Astrocyte of the cerebellum (primary cell): ENCODE measurements at regions of chr1 and their contacts with region 1.

Region 1: DNA sequence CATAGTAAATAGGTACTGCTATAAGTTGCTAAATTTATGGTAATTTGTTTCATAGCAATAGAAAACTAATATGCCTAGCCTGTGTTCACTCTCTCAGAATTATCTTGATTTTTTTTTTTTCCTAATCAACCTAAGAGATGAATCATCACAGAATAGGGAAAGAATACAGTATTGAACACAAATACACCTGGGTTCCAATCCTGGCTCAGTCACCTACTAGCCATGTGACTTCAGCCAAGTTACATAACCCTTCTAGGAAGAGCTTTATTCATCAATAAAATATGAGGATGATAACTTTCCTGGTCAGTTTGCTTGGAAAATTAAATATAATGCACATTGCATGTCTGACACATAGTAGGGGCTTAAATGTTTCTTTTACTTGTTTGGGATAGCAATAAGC is 279.5 kb downstream of the FOXD2 start:
- DNase-seq: no peak
- H3K4me3 ChIP-seq: no peak overlapping the region
- CTCF ChIP-seq: no peak

Region 2: GRCh38 chr1:47803815-47804498 is 86.6 kb after region 1 on chr1:
- in situ Hi-C with region 1: loop called (anchors 5 kb)
- DNase-seq: no peak
- H3K4me3 ChIP-seq: no peak overlapping the region
- CTCF ChIP-seq: no peak